ENCODE measurements at regions of chr6 and their contacts with region 1.

Region 1: GRCh38 chr6:160455541-160456213 is 107.5 kb downstream of the SLC22A3 start:
- DNase-seq: peak; percentile 15 to 44
- ATAC-seq: peak; percentile 72 to 82
- H3K4me3 ChIP-seq: peak overlapping the region in 3 of 4 donors; percentile 13 to 24 (median 22)
- H3K27ac ChIP-seq: peak overlapping the region; percentile 2 to 44 (median 34)
- H3K4me1 ChIP-seq: peaks cover 0 to 5% of the 10 kb centered on the region in 2 donors
- H3K27me3 ChIP-seq: no peaks in the 10 kb centered on the region
- CTCF ChIP-seq: peak; percentile 94 to 99 (median 96)
- POLR2A ChIP-seq: no peak

Region 2: GRCh38 chr6:159852877-159853276 is 602.8 kb before region 1 on chr6:
- in situ Hi-C with region 1: loop called in 1 of 4 experiments (anchors 25 kb)
- intact Hi-C with region 1: no loop called
- DNase-seq: no peak
- ATAC-seq: no peak
- H3K4me3 ChIP-seq: no peak overlapping the region
- H3K27ac ChIP-seq: no peak overlapping the region
- H3K4me1 ChIP-seq: no peaks in the 10 kb centered on the region
- H3K27me3 ChIP-seq: no peaks in the 10 kb centered on the region
- CTCF ChIP-seq: no peak
- POLR2A ChIP-seq: no peak

Region 3: GRCh38 chr6:159862103-159862502 is 593.6 kb before region 1 on chr6:
- in situ Hi-C with region 1: loop called in 3 of 4 experiments (anchors 10 to 25 kb)
- intact Hi-C with region 1: loop called (anchors 1 kb)
- DNase-seq: no peak
- ATAC-seq: no peak
- H3K4me3 ChIP-seq: no peak overlapping the region
- H3K27ac ChIP-seq: no peak overlapping the region
- H3K4me1 ChIP-seq: peaks cover 0 to 3% of the 10 kb centered on the region in 2 donors
- H3K27me3 ChIP-seq: no peaks in the 10 kb centered on the region
- CTCF ChIP-seq: no peak
- POLR2A ChIP-seq: no peak

Region 4: DNA sequence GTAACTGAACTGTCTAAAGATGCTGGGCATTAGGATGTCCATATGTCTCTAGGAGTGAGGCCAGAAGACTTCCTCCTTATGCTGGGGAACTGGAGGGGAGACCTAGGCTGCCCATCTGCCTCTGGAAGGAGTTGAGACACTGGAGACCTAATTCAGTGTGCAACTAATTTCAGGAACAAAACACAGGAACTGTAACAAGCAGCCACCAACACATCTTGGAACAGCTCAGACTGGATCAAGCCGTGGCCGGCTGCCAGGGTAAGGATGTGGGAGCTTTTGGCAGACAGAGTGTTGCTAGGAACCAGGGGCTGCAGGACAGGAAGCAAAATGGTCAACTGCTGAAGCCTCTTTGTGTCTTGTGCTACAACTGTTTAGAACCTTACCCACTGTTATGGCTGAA is 581.2 kb before region 1 on chr6:
- in situ Hi-C with region 1: loop called (anchors 10 to 25 kb)
- intact Hi-C with region 1: no loop called
- DNase-seq: no peak
- ATAC-seq: no peak
- H3K4me3 ChIP-seq: no peak overlapping the region
- H3K27ac ChIP-seq: no peak overlapping the region
- H3K4me1 ChIP-seq: no peaks in the 10 kb centered on the region
- H3K27me3 ChIP-seq: no peaks in the 10 kb centered on the region
- CTCF ChIP-seq: no peak
- POLR2A ChIP-seq: no peak

Region 5: GRCh38 chr6:160088069-160088783 is 367.5 kb before region 1 on chr6:
- in situ Hi-C with region 1: loop called in 1 of 4 experiments (anchors 10 kb)
- intact Hi-C with region 1: no loop called
- DNase-seq: peak in 1 of 2 donors; percentile 65
- ATAC-seq: peak; percentile 66 to 84
- H3K4me3 ChIP-seq: no peak overlapping the region
- H3K27ac ChIP-seq: peak overlapping the region in 3 of 4 donors; percentile 25 to 58 (median 30)
- H3K4me1 ChIP-seq: no peaks in the 10 kb centered on the region
- H3K27me3 ChIP-seq: no peaks in the 10 kb centered on the region
- CTCF ChIP-seq: peak; percentile 48 to 59 (median 53)
- POLR2A ChIP-seq: no peak

Region 6: DNA sequence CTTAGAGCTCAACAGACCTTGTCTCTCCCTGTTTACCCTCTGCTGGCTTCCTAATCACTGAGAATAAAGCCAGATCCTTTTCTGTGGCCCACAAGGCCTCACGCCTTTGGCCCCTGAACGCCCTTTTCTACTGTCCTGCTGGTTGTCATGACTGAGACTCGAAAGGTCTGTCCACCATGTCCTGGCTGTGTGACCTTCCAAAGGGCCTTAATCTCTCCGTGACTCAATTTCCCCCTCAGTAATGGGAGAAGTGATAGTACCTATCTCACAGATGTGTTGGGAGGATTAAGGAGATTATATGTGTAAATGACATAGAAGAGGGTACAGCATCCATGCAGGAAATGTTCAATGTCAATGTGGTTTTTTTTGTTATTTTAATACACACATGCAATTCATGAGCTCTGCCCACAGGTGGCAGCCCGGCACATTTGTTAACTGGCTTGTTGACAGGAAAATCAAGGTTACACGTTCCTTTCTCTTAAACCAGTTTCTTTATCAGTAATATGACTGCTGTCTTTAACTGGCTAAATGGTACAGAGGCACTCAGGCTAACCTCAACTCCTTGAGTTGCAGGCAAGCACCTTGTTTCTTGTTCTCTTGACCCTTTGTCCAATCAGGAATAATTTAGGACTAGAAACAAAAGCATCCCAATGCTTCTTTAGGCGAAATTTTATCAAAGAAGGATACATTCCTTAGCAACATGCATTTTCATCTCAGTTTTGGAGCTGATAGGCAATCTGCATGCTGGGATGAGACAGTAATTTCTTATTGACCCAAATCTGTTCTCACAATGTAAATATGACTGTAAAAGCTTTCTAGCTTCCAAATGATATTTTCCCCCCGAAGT is 317.5 kb before region 1 on chr6:
- in situ Hi-C with region 1: loop called in 3 of 4 experiments (anchors 5 to 25 kb)
- intact Hi-C with region 1: loop called (anchors 1 kb)
- DNase-seq: no peak
- ATAC-seq: peak; percentile 43 to 65
- H3K4me3 ChIP-seq: no peak overlapping the region
- H3K27ac ChIP-seq: peak overlapping the region in 1 of 4 donors; percentile 21
- H3K4me1 ChIP-seq: peaks cover 0 to 19% of the 10 kb centered on the region in 2 donors
- H3K27me3 ChIP-seq: no peaks in the 10 kb centered on the region
- CTCF ChIP-seq: peak; percentile 60 to 74 (median 71)
- POLR2A ChIP-seq: no peak

Region 7: DNA sequence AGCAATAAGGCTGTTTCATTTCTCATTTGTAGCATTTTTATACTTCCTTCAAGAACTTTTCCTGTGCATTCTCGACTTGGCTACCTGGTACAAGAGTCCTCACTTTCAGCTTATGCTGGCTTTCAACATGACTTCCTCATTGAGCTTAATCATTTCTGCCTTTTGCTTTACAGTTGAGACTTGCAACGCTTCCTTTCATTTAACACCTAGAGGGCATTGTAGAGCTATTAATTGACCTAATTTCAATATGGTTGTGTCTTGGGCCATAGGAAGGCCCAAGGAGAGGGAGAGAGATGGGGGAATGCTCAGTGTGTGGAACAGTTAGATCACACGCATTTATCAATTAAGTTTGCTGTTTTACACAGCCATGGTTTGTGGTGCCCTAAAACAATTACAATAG is 234.3 kb before region 1 on chr6:
- in situ Hi-C with region 1: no loop called
- intact Hi-C with region 1: loop called (anchors 2 kb)
- DNase-seq: no peak
- ATAC-seq: peak; percentile 47 to 74
- H3K4me3 ChIP-seq: no peak overlapping the region
- H3K27ac ChIP-seq: no peak overlapping the region
- H3K4me1 ChIP-seq: no peaks in the 10 kb centered on the region
- H3K27me3 ChIP-seq: peaks cover 0 to 6% (median 0%) of the 10 kb centered on the region in 3 donors
- CTCF ChIP-seq: peak in 4 of 5 experiments; percentile 12 to 28 (median 23)
- POLR2A ChIP-seq: no peak

Measured in gastrocnemius medialis (tissue), 4 donors.